ENCODE measurements at regions of chr5 and their contacts with region 1.

Region 1: GRCh38 chr5:159178978-159179377 is 30.4 kb downstream of the RNF145 start:
- DNase-seq: no peak
- ATAC-seq: peak; percentile 73

Region 2: GRCh38 chr5:159083548-159084452 is 95.2 kb before region 1 on chr5:
- intact Hi-C with region 1: no loop called
- DNase-seq: no peak
- ATAC-seq: no peak

Region 3: GRCh38 chr5:159209438-159210305 is 30.7 kb after region 1 on chr5 and contains the start of gene RNF145:
- intact Hi-C with region 1: loop called (anchors 2 kb)
- DNase-seq: peak; percentile 95
- ATAC-seq: peak; percentile 82
- total RNA-seq, gene RNF145: 21.9 TPM

Region 4: GRCh38 chr5:160008877-160009590 is 830.1 kb after region 1 on chr5 and contains the start of gene TTC1:
- intact Hi-C with region 1: loop called (anchors 10 kb)
- DNase-seq: peak; percentile 94
- ATAC-seq: peak; percentile 97
- total RNA-seq, gene TTC1: 114 TPM

Measured in Right ventricle myocardium inferior (tissue), 1 donor.